ENCODE measurements at regions of chr1 and their contacts with region 1.

Region 1: DNA sequence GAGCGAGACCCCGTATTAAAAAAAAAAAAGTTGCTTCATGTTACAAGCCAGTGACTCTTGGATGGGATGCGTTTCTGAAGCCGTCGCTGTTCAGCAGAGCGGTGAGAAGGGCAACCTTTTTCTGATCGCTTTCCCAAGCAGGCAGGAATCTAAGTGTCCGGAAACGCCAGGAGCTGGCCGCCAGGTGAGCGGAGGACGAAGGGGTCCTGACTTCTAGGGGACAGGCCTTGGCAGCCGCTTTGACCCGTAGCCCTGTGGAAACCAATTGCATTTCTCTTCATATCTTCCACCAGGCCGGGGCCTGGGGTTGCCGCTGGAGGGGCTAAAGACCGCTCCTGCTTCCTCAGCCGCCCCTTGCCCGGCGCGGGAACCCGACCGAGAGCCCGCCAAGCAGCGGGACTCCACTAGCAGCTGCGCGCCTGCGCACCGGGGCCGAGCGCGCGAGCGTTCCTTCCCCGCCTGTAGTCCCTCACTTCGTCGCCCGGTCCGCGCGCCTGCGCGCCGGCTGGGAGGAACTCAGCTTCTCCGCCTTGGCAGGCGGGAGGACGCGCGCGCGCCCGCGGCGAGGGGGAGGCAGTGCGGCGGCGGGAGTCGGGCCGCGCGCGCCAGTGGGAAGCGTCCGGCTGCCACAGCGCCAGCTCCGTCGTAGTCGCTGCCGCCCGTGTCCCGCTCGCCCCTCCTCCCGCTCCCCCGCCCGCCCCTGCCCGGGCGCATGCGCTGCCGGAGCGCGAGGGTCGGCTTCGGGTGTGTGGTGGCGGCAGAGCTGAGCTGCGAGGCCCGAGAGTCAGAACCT is at the start of gene SPEN:
- DNase-seq: peak; percentile 100
- ATAC-seq: peak; percentile 95
- total RNA-seq, gene SPEN: 21.4 TPM

Region 2: DNA sequence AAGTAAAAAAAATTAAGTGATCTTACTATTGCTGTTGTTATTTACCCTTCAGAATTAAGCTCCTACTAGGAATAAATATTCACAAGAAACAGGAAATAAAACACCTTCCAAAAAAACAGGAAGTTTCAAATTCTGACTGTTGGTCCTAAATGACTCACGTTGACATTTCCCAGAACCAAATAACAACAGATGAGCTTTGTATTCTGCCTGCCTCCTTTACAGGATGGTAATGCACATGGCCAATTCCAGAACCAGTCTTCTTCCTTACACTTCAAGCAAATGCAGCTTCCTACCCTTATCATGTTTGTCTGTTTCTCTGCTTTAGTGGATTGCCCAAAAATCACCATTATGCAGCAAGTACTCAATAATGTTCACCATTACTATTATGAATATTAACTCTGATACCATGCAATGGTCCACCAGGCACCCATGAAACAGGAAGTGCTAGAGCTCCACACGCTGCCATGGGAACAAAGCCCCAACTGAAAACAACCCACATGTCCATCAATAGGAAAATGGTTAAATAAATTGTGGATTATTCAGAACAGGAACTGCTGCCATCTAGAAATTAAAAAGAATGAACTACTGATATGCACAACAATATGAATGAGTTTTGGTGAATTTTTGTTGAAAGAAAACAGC is 332.2 kb before region 1 on chr1:
- intact Hi-C with region 1: no loop called
- DNase-seq: no peak
- ATAC-seq: no peak

Region 3: GRCh38 chr1:15723631-15724251 is 123.6 kb before region 1 on chr1:
- intact Hi-C with region 1: no loop called
- DNase-seq: no peak
- ATAC-seq: no peak

Region 4: GRCh38 chr1:15825800-15826199 is 21.5 kb before region 1 on chr1:
- intact Hi-C with region 1: no loop called
- DNase-seq: no peak
- ATAC-seq: no peak

Region 5: DNA sequence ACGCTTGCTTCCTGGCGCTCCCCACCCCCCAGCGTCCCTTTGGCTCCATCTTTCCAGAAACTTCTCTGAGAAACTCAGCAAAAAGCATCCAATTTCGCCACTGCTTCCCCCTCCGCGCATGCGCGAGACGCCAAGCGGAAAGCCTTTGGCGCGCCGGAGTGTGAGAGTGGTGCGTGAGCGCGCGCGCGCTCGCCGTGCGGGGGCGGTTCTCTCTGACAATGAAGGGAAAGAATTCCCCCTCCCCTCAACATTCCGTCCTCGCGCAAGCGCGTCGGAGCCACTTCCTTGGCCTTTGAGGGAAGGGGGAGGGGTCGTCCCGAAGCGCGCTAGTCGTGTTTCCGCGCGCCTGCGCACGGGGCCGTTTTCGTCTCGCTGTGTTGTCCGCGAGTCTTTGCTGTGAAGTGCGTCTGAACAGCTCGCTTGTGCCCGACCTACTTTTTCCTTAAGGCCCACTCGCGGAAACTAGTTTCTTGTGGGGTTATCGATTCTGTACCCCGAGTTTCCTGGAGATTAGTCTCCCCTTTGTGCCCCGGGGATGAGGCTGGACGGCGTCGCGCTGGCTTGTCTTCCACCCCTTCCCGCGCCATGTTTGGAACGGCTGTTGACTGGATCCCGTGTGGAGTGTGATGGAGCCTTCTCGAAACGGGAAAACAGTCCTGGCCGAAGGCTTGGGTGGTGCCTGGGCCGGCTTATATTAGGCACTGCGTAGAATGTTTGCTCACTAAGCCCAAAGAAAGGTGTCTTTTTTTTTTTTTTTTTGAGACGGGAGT is 11.4 kb before region 1 on chr1:
- intact Hi-C with region 1: loop called (anchors 1 kb)
- DNase-seq: peak; percentile 100
- ATAC-seq: peak; percentile 91

Region 6: DNA sequence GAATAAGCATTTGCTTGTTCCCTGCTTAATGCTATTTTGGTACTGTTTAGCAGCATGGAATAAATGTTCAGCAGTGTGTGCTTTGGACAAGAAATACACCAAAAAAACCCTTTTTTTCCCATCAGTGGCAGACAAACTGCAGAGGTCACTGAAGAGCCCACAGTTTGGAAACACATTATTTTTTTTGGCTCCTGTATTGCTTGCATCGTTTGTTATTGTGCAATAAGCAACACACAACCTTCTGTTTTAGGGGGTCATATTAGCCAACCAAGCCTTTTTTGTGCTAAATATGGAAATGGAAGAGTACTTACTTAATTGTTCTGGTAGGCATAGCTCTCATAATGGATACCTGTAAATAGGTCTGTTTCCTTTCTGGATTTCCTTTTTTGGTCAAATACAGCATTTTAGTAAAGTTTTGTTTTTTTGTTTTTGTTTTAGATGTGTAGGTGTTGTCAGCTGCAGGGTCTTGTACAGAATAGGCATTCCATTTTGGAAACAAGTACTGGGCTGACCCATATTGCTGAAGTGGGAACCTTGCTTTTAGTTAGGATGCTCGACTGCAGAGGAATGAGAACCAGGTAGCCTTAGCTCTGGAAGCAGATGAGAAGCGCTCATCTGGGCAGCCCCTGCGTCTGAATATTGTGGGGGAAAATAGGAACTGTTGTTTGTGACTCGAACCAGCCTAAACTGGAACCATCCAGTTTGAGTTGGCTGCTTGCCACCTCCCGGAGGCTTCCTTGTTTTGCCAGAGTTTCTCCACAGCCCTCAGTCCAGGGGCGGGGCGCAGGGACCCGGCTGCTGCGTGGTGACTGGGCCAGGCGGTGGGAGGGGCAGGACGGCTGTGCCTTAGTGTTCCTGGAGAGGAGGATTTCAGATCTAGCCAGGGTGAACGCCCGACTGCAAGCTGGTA is 38.7 kb after region 1 on chr1:
- intact Hi-C with region 1: loop called (anchors 5 kb)
- DNase-seq: peak; percentile 99
- ATAC-seq: peak; percentile 97

Measured in Right ventricle myocardium inferior (tissue), 1 donor.